Heart right ventricle (tissue), 16 donors: ENCODE measurements at regions of chr10 and their contacts with region 1.

Region 1: GRCh38 chr10:77977016-77977415 is 50.5 kb upstream of the DLG5 start:
- DNase-seq: no peak
- ATAC-seq: no peak
- H3K4me3 ChIP-seq: no peak overlapping the region
- H3K27ac ChIP-seq: no peak overlapping the region
- H3K4me1 ChIP-seq: peaks cover 0 to 10% (median 0%) of the 10 kb centered on the region in 9 donors
- H3K27me3 ChIP-seq: no peaks in the 10 kb centered on the region
- CTCF ChIP-seq: no peak

Region 2: GRCh38 chr10:77841711-77842371 is 135.2 kb before region 1 on chr10:
- intact Hi-C with region 1: loop called in 4 of 10 experiments (anchors 2 to 10 kb)
- DNase-seq: no peak
- ATAC-seq: no peak
- H3K4me3 ChIP-seq: no peak overlapping the region
- H3K27ac ChIP-seq: no peak overlapping the region
- H3K4me1 ChIP-seq: peaks cover under 1 to 37% (median 12%) of the 10 kb centered on the region in 9 donors
- H3K27me3 ChIP-seq: no peaks in the 10 kb centered on the region
- CTCF ChIP-seq: no peak

Region 3: DNA sequence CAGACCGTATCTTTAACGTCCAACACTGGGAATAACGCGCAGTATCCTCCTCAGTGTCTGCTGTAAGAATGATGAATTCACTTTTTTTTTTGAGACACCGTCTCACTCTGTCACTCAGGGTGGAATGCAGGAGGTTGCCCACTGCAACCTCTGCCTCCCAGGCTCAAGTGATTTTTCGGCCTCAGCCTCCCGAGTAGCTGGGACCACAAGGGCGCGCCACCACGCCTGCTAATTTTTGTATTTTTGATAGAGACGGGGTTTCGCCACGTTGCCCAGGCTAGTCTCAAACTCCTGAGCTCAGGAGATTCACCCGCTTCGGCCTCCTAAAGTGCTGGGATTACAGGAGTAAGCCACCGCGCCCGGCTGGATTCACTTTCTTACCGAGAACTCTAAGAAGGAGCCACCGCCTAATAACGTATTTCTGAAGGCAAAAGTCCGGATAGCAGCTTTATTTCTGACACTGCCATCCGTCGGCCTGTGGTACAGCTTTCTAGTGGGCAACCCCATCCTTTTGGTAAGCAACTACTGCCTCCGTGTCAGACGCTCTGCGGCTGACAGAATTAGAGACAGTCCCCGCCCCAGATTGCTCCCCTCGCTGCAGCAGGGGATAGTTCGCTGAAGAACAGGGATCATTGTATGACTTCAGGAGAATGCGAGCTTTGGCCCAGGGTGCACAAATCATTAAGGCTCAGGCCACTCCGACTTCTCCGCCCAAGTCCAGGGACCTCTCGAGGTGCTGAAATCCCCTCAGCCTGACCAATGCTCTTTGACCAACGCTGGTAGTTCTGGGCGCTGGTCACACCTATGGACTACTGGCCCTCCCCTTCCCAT is 51.6 kb after region 1 on chr10:
- intact Hi-C with region 1: no loop called
- DNase-seq: no peak
- ATAC-seq: peak in 7 of 8 donors; percentile 4 to 40 (median 17)
- H3K4me3 ChIP-seq: peak overlapping the region; percentile 60 to 100 (median 83)
- H3K27ac ChIP-seq: peak overlapping the region in 9 of 10 donors; percentile 48 to 82 (median 78)
- H3K4me1 ChIP-seq: peaks cover 8 to 37% (median 20%) of the 10 kb centered on the region in 9 donors
- H3K27me3 ChIP-seq: no peaks in the 10 kb centered on the region
- CTCF ChIP-seq: no peak